GM18951 (cell line): ENCODE measurements at regions of chr3 and their contacts with region 1.

Region 1: GRCh38 chr3:148962513-148962912 is 28.8 kb upstream of the GYG1 start:
- POLR2A ChIP-seq: no peak

Region 2: DNA sequence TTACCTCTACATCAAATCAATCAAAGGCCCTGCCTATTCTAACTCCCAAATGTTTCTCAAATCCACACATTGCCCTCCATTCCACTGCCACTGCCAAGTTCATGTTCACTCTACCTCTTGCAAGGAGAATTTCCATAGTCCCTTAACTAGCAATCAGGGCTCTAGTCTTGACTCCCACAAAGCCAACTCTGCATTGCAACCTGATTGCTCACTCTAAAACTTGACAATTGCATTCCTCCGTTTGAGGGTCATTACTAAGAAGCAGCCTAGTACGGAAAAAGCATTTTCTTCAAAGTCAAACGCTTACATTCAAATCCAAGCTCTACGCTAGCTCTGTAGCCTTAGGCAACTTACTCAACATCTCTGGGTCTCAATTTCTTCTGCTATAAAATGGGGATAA is 96.3 kb before region 1 on chr3:
- in situ Hi-C with region 1: no loop called
- POLR2A ChIP-seq: no peak

Region 3: DNA sequence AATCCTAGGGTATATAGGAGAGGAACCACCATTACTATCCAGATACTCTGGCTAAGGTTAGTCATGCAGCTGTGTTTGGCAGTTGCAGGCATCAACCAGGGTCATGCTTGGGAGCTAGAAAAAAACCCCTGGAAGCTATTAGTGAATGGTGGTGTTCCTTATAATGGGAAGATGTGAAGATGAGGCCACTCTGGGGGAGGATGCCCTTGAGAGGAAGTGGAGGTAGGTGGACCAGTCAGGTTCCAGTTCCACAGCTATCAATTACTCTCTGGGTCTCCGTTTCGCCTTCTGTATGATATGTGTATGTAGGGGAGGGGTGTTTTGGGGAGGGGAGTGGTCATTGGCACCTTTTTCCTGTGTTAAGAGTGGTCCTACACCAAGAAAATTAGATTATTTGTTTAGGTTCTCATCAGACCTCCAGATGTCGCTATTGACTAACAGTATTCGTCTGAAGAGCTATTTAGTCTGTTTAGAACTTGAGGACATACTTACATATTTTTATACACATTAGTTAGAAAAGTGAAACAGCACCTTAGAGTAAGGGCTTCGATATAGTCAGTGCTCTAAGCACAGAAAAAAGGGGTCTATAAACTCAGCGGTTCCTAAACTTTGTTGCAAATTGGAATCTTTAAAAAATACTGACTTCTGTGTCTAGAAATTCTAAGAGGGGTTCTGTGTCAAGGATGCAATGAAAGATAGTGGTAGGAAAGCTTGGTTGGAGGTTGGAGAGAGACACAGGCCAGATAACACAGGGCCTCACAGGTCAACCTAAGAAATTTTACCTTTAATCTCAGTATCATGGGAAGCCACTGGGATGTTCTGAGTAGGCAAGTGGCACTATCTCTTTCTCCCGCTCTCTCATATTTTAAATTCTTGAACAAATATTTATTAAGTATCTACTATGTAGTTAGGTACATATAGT is 157.8 kb after region 1 on chr3:
- in situ Hi-C with region 1: loop called (anchors 5 kb)
- POLR2A ChIP-seq: no peak